ENCODE measurements at regions of chr3 and their contacts with region 1.

Region 1: DNA sequence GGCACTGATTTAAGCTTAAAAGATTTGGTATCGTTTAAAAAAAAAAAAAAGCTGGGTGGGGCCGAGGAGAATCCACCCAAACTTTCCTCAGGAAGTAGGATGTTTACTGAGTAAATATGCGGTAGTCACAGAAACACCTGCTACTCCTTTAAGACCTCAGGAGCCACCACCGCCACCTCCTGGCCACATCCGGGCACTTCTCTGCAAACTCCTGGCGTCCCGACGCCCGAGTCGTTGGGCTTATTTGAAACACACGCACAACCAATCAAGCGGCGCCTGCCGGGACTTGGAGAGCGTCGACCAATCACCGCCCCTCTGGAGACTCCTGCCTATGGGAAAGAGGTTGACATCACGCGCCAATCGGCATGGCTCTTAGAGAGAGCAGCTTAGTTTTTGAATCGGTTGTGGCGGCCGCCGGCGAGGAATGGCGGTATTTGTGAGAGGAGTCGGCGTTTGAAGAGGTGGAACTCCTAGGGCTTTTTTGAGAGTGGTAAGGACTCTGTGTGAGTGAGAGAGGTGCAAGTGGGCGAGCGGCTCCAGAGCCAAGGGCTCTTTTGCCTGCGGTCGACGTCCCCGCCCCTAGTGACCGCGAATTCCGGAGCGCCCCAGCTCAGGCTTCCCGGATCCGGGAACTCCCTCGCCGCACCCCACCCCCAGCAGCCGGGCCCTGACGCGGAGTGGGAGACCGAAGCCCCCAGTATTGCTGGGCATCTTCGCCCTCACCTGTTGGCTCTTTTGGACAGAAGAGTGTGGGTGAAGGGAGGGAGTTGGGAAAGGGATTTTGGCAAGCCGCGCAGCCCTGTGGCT is at the start of gene ECT2:
- DNase-seq: peak; percentile 99
- H3K4me3 Mint-ChIP-seq: peak within 1 kb of the TSS; percentile 94
- H3K27ac Mint-ChIP-seq: peak within 1 kb of the TSS; percentile 94
- H3K4me1 Mint-ChIP-seq: peaks cover 41% of the 10 kb centered on the region
- H3K27me3 Mint-ChIP-seq: peaks cover 8% of the 10 kb centered on the region
- total RNA-seq, gene ECT2: 67.7 to 68.8 TPM

Region 2: GRCh38 chr3:172467170-172467824 is 283.3 kb before region 1 on chr3:
- CTCF ChIA-PET with region 1: no interaction called
- POLR2A ChIA-PET with region 1: no interaction called
- DNase-seq: no peak
- H3K4me3 Mint-ChIP-seq: no peak overlapping the region
- H3K27ac Mint-ChIP-seq: no peak overlapping the region
- H3K4me1 Mint-ChIP-seq: peaks cover 8% of the 10 kb centered on the region
- H3K27me3 Mint-ChIP-seq: peaks cover 11% of the 10 kb centered on the region

Region 3: DNA sequence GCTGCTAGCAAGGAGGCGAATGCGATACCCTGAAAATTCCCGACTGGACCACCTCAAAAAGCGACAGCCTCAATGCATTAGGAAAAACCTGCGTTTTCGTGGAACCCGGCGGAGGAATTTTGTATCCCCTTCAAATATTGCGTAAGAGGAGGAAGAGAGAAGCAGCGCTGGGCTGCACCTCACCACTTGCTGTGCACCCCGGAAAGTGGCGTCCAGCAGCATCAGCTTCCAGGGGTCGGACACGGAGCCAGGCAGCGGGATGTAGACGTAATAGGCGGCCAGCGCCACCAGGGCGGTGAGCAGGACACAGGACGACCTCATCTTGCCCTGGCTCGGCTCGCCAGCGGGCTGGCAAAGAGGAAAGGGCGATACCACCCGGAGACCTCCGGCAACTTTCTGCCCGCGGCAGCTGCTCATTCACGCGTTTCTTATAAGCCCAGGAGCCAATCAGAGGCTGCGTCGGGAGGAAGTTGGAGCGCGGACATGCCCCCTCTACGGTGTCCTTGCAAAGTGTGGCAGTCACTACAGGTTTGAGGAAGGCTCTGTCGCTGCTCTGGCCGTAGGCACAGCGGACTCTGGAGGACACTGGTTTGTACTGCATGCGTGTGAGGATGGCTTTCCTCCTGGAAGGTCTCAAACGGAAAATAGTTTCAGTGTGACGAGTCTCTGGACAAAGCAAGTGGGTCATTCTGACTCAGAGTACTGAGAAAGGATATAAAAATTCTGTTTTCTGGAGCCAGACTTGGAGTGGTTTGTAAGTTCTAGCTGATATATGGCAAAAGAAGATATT is 39.7 kb before region 1 on chr3 and contains the start of gene NCEH1:
- CTCF ChIA-PET with region 1: interaction called, 21 read pairs
- POLR2A ChIA-PET with region 1: interaction called, 11 read pairs
- DNase-seq: peak; percentile 83
- H3K4me3 Mint-ChIP-seq: peak within 1 kb of the TSS; percentile 95
- H3K27ac Mint-ChIP-seq: peak within 1 kb of the TSS; percentile 66
- H3K4me1 Mint-ChIP-seq: peaks cover 28% of the 10 kb centered on the region
- H3K27me3 Mint-ChIP-seq: peaks cover 4% of the 10 kb centered on the region
- total RNA-seq, gene NCEH1: 7.2 to 9.6 TPM

Region 4: DNA sequence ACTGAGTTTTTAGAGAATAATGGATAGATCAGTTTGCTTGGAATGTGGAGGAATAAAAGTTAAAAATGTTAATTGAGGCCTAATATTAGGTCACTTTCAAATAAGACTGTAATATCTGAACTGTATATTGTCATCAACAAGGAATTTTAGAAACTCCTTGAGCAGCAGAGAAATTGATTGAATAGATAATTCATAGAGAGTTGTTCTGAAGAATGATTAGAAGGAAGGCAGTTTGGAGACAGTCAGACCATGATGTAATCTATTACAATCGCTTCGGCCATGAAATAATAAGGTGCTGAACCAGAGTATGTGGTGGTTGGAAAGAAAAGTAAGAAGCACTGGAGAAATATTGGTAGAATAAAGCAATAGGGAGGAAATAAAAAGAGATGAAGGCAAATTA is 15.7 kb after region 1 on chr3:
- CTCF ChIA-PET with region 1: interaction called, 9 read pairs
- POLR2A ChIA-PET with region 1: interaction called, 11 read pairs
- DNase-seq: no peak
- H3K4me3 Mint-ChIP-seq: no peak overlapping the region
- H3K27ac Mint-ChIP-seq: no peak overlapping the region
- H3K4me1 Mint-ChIP-seq: peaks cover 7% of the 10 kb centered on the region
- H3K27me3 Mint-ChIP-seq: no peaks in the 10 kb centered on the region

Region 5: DNA sequence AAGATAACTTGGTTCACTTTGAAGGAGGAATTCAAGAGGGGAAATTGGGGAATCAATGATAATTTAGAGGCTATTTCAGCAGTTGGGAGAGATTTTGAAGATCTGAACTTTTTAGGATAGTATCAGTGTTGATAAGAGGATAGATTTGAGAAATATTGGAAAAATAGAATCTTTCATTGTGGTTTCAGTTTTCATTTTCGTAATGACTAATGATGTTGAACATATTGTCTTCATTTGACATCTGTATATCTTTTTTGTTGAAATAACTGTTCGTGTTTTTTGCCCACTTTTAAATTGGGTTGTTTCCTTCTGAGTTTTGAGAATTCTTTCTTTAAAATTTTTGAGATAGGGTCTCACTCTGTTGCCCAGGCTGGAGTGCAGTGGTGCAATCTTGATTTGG is 21.1 kb after region 1 on chr3:
- CTCF ChIA-PET with region 1: interaction called, 9 read pairs
- POLR2A ChIA-PET with region 1: interaction called, 10 read pairs
- DNase-seq: no peak
- H3K4me3 Mint-ChIP-seq: no peak overlapping the region
- H3K27ac Mint-ChIP-seq: peak overlapping the region; percentile 23
- H3K4me1 Mint-ChIP-seq: peaks cover 20% of the 10 kb centered on the region
- H3K27me3 Mint-ChIP-seq: no peaks in the 10 kb centered on the region